ENCODE measurements at regions of chr10 and their contacts with region 1.

Region 1: GRCh38 chr10:104254493-104255310 is at the start of gene GSTO1:
- DNase-seq: peak; percentile 80 to 84 (median 82)
- H3K4me3 ChIP-seq: peak within 1 kb of the TSS; percentile 96 to 97 (median 96)
- H3K4me3 Mint-ChIP-seq: peak within 1 kb of the TSS; percentile 88 to 98
- H3K27ac ChIP-seq: peak within 1 kb of the TSS; percentile 96 to 99
- H3K27ac Mint-ChIP-seq: peak within 1 kb of the TSS; percentile 96 to 99 (median 99)
- H3K4me1 ChIP-seq: peaks cover 44 to 58% of the 10 kb centered on the region in 2 donors
- H3K4me1 Mint-ChIP-seq: peaks cover 67% of the 10 kb centered on the region
- H3K27me3 ChIP-seq: no peaks in the 10 kb centered on the region
- H3K27me3 Mint-ChIP-seq: peaks cover 0 to 2% (median 0%) of the 10 kb centered on the region in 3 donors
- CTCF ChIP-seq: no peak
- polyA plus RNA-seq, gene GSTO1: 131 to 581 (median 495) TPM

Region 2: GRCh38 chr10:104309976-104310674 is 55.4 kb after region 1 on chr10:
- intact Hi-C with region 1: no loop called
- DNase-seq: no peak
- H3K4me3 ChIP-seq: no peak overlapping the region
- H3K4me3 Mint-ChIP-seq: no peak overlapping the region
- H3K27ac ChIP-seq: peak overlapping the region in 1 of 2 donors; percentile 33
- H3K27ac Mint-ChIP-seq: peak overlapping the region in 2 of 7 donors; percentile 19 to 37
- H3K4me1 ChIP-seq: peaks cover 9 to 17% of the 10 kb centered on the region in 2 donors
- H3K4me1 Mint-ChIP-seq: peaks cover 33% of the 10 kb centered on the region
- H3K27me3 ChIP-seq: no peaks in the 10 kb centered on the region
- H3K27me3 Mint-ChIP-seq: no peaks in the 10 kb centered on the region
- CTCF ChIP-seq: no peak

Region 3: DNA sequence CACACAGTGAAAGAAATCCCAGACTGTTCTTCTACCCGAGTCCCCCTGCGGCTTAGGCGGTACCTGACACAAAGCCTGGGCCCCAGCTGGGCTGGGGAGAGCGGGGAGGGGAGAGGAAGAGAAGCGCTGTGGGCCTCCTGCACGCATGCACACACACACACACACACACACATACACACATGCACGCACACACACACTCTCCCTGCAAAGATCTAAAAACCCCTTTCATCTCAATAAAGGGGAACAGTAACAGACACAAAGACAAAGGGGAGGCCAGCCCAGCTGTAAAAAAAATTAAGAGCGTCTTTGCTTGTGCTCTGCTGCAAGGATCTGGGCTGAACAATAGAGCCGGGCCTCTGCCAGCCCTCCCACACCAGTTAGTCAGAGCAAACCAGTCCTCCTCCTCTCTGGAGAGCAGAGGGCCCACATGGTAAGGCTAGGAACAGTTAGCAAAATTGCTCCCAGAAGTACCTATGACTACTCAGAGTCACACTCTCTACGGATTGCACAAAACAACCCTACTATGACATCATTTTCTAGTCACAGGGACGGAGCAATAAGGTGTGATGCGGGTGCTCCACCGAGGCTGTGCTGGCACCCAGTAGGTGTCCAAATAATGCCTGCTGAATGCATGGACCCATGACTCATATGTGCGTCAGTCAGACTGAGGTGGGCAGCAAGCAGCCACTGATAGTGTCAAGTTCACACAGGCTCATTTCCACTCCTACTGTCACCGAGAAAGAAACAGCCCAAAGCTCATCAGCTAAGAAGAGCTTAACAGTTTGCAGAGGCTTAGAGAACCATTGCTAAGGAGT is 74.4 kb after region 1 on chr10:
- intact Hi-C with region 1: loop called (anchors 10 kb)
- DNase-seq: peak; percentile 90 to 98 (median 95)
- H3K4me3 ChIP-seq: peak overlapping the region in 1 of 3 experiments; percentile 65
- H3K4me3 Mint-ChIP-seq: peak overlapping the region; percentile 61 to 82
- H3K27ac ChIP-seq: peak overlapping the region; percentile 61 to 86
- H3K27ac Mint-ChIP-seq: peak overlapping the region; percentile 91 to 96 (median 94)
- H3K4me1 ChIP-seq: peaks cover 95 to 98% of the 10 kb centered on the region in 2 donors
- H3K4me1 Mint-ChIP-seq: peaks cover 95% of the 10 kb centered on the region
- H3K27me3 ChIP-seq: no peaks in the 10 kb centered on the region
- H3K27me3 Mint-ChIP-seq: peaks cover 0 to 5% (median 0%) of the 10 kb centered on the region in 3 donors
- CTCF ChIP-seq: no peak